IMR-90 (cell line): ENCODE measurements at regions of chr5 and their contacts with region 1.

Region 1: GRCh38 chr5:96934708-96935558 is 947 bp upstream of the LNPEP start:
- DNase-seq: peak; percentile 92
- ATAC-seq: peak; percentile 79
- H3K4me3 ChIP-seq: peak overlapping the region; percentile 68
- H3K27ac ChIP-seq: peak overlapping the region; percentile 92
- H3K4me1 ChIP-seq: no peaks in the 10 kb centered on the region; the same call in 1 of the 2 replicates
- H3K27me3 ChIP-seq: no peaks in the 10 kb centered on the region
- CTCF ChIP-seq: no peak
- POLR2A ChIP-seq: no peak
- RAD21 ChIP-seq: no peak

Region 2: DNA sequence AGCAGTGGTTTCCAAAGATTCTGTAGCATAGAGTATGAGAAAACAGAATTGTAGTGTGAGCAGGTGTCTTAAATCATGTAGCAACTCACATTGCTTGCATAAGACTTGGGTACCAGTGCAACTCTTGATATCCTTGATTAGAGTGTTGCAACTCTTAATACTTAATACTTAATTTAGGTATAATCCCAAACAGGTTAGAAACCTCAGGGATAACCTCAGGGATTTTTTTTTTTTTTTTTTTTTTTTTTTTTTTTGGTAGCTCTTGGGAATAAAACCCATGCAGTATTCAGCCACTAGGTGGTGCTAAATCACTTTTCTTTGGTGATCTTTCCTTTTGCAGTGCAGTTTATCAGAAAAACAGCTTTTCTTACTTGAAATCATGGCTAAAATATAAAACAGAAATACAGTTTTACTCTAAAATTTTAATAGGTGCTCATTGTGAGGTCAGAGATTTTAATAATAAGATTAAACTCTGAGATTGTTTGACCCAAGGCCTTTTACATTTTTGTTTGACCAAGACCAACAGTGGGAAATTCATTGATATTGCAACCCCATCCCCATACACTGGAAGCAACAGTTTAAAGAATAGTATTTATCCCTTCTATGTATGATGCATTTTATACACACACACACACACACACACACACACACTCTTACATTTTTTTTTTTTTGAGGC is 182.5 kb before region 1 on chr5:
- CTCF ChIA-PET with region 1: interaction called, 6 read pairs
- POLR2A ChIA-PET with region 1: no interaction called
- dilution Hi-C with region 1: no loop called
- in situ Hi-C with region 1: no loop called
- intact Hi-C with region 1: loop called (anchors 2 kb)
- DNase-seq: peak; percentile 69
- ATAC-seq: peak; percentile 44; the same call in 1 of the 2 replicates
- H3K4me3 ChIP-seq: no peak overlapping the region
- H3K27ac ChIP-seq: no peak overlapping the region
- H3K4me1 ChIP-seq: peaks cover 1% of the 10 kb centered on the region
- H3K27me3 ChIP-seq: no peaks in the 10 kb centered on the region
- CTCF ChIP-seq: peak; percentile 76
- POLR2A ChIP-seq: no peak
- RAD21 ChIP-seq: peak; percentile 68

Region 3: GRCh38 chr5:96807075-96807654 is 127.8 kb before region 1 on chr5:
- CTCF ChIA-PET with region 1: no interaction called
- POLR2A ChIA-PET with region 1: no interaction called
- dilution Hi-C with region 1: no loop called
- in situ Hi-C with region 1: no loop called
- intact Hi-C with region 1: loop called (anchors 1 kb)
- DNase-seq: peak; percentile 53
- ATAC-seq: peak; percentile 65
- H3K4me3 ChIP-seq: peak overlapping the region; percentile 72
- H3K27ac ChIP-seq: peak overlapping the region; percentile 94
- H3K4me1 ChIP-seq: no peaks in the 10 kb centered on the region
- H3K27me3 ChIP-seq: no peaks in the 10 kb centered on the region
- CTCF ChIP-seq: no peak
- POLR2A ChIP-seq: 0 out of 2 replicates have a peak, but pooled peaks have one; percentile 56
- RAD21 ChIP-seq: 0 out of 2 replicates have a peak, but pooled peaks have one; percentile 11

Region 4: DNA sequence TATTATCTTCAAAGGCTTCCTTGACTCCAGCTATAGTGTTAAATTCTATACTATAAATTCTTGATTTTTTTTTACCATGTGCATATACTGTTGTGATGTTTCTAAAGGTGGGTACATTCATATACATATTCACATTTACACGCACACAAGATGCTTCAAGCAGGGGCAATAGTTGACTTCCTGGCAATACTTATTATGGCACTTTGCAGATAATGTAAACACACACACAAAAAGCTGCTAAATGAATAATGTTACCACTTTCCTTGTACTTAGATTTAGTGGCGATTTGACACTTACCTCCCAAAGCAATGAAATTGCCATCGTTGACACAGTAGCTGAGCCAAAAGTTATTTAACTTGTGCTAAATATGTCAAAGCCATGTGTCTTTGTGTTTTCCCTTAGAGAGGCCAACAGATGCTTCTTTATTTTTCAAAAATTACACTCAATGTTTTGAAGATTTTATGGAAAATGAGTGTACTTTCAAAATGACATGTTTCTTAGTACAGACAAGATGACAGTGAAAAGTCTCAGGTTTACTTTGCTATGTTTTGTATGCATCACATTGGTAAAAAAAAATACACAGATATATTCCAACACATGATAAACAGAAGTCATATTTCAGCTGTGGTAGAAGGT is 70.9 kb before region 1 on chr5:
- CTCF ChIA-PET with region 1: no interaction called
- POLR2A ChIA-PET with region 1: no interaction called
- dilution Hi-C with region 1: no loop called
- in situ Hi-C with region 1: no loop called
- intact Hi-C with region 1: no loop called
- DNase-seq: no peak
- ATAC-seq: no peak
- H3K4me3 ChIP-seq: no peak overlapping the region
- H3K27ac ChIP-seq: no peak overlapping the region
- H3K4me1 ChIP-seq: no peaks in the 10 kb centered on the region
- H3K27me3 ChIP-seq: no peaks in the 10 kb centered on the region
- CTCF ChIP-seq: no peak
- POLR2A ChIP-seq: no peak
- RAD21 ChIP-seq: no peak

Region 5: GRCh38 chr5:96997265-96997859 is 62.4 kb after region 1 on chr5:
- CTCF ChIA-PET with region 1: interaction called, 3 read pairs
- POLR2A ChIA-PET with region 1: no interaction called
- dilution Hi-C with region 1: no loop called
- in situ Hi-C with region 1: no loop called
- intact Hi-C with region 1: loop called (anchors 5 kb)
- DNase-seq: peak; percentile 63
- ATAC-seq: peak; percentile 82
- H3K4me3 ChIP-seq: no peak overlapping the region
- H3K27ac ChIP-seq: no peak overlapping the region
- H3K4me1 ChIP-seq: peaks cover 3% of the 10 kb centered on the region; the same call in 1 of the 2 replicates
- H3K27me3 ChIP-seq: no peaks in the 10 kb centered on the region
- CTCF ChIP-seq: peak; percentile 52
- POLR2A ChIP-seq: no peak
- RAD21 ChIP-seq: peak; percentile 48